ENCODE measurements at regions of chr11 and their contacts with region 1.

Region 1: DNA sequence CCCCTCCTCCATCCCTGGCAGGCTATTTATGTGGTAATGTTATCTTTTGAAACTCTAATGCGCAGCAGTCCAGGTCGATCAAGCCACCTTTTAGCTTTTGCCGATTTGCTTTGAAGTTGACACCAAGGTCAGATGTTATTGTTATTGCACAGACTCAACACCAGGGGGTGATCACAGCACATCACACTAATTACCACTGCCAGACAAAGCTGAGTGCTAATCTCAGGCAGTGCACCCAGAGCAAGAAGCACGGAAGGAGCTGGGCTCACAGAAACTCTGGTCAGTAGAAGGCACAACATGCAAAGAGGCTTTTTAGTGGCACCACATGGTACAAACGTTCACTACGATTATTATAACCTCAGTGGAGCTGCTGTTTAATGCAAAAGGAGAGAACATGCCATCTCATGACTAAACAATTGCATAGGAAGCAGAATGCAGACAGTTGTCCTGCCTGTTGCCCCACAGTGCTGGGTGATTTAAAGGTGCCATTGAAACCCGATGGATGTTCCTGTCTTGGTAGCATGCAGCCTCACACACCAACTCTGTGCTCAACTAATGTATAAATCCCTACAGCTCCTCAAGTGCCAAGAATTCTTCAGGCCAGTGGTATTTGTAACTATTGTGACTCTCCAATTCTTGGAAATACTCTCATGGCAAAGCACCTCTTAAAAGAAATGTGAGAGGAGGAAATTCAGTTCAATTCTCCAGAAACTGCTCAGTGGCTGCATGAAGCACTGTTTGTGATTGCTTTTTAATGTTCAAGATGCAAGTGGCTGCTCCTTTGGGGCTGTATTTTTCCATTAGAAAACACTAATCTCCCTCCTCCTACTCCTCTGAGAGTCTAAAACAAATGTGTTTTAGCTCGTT is 353.9 kb upstream of the DDI1 start:
- ATAC-seq: peak; percentile 91 to 98 (median 96)
- H3K4me3 ChIP-seq: no peak overlapping the region
- H3K27ac ChIP-seq: no peak overlapping the region
- H3K4me1 ChIP-seq: peaks cover 3 to 11% of the 10 kb centered on the region in 2 donors

Region 2: GRCh38 chr11:103936059-103936458 is 253.5 kb after region 1 on chr11:
- in situ Hi-C with region 1: no loop called
- ATAC-seq: no peak
- H3K4me3 ChIP-seq: no peak overlapping the region
- H3K27ac ChIP-seq: no peak overlapping the region
- H3K4me1 ChIP-seq: no peaks in the 10 kb centered on the region

Region 3: GRCh38 chr11:104164028-104164520 is 481.5 kb after region 1 on chr11 and contains the start of gene PDGFD:
- in situ Hi-C with region 1: loop called in 2 of 9 experiments (anchors 25 kb)
- ATAC-seq: peak; percentile 83 to 98 (median 96)
- H3K4me3 ChIP-seq: peak within 1 kb of the TSS; percentile 35 to 55 (median 39)
- H3K27ac ChIP-seq: no peak within 1 kb of the TSS
- H3K4me1 ChIP-seq: no peaks in the 10 kb centered on the region
- total RNA-seq, gene PDGFD: 0.43 to 23.1 (median 3.0) TPM